Activated CD4-positive, alpha-beta T cell treated with anti-CD3 and anti-CD28 coated beads, Interleukin-2, amount 10 ng/mL, durations not matched to agents 24 days and 14 days (primary cell): ENCODE measurements at regions of chr1 and their contacts with region 1.

Region 1: DNA sequence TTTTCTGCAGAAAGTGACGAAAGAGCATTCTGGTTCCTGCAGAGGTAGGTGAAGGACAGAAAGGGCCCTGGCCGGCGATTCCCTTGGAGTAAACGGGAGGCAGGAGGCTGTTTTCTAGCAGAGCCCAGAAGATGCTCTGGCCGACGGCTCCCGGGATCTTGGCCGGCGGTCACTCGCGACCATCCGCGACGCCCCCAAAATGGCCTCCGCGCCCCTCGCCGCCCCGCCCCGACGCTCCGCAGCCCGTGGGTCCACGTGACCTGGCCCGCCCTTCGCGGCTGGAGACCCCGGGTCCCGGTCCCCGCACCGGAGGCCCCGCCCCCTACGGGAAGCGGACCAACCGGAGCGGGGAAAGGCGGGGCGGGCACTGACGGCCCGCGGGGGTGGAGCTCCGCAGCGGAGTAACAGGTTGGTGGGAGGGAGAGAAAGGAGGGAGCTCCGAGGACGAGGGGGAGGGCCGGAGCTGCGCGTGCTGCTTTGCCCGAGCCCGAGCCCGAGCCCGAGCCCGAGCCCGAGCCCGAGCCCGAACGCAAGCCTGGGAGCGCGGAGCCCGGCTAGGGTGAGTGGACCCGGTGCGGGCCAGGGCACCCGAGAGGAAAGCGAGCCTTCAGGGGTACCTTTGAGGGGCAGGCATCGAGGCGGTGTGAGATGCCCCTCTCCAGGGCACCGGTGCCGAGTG is at the start of gene CGN:
- DNase-seq: peak; percentile 96
- H3K4me3 Mint-ChIP-seq: peak within 1 kb of the TSS; percentile 82
- H3K27ac Mint-ChIP-seq: no peak within 1 kb of the TSS
- H3K4me1 Mint-ChIP-seq: peaks cover 25% of the 10 kb centered on the region
- H3K27me3 Mint-ChIP-seq: peaks cover 32% of the 10 kb centered on the region
- total RNA-seq, gene CGN: 0.07 and 0.28 TPM in 2 replicates

Region 2: DNA sequence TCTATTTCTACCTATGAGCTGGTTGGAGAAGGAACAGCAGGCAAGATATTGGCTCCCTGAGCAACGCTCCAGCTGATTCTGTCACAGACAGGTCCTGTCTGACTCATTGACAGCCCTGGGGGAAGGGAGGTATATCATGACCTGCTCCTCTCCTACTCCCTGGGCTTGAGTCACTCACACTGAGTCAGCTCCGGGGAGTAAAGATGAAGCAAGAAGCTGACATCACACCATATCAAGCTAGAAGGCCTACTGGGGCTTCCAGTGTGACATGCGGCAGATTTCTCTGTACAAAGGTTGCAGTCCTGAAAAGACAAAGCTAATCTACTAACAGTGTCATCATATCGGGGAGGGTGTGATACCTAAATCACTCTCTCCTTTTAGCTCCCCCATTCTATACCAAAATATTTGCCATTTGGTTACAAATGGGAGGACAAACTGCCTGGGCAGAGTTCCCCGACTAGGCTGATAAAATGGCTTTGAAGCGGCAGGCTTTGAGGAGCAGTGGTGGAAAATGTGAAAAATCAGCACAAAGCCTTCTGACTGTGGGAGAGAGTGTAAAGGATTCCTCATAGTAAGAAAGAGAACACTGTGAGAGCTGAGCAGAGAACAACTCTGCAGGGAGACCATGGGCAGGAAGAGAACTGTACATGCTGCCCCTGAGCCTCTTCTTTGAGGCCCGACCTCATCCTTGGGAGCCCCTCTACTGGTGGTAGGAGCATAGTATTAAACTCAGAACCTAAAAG is 199.3 kb before region 1 on chr1:
- intact Hi-C with region 1: no loop called
- DNase-seq: peak; percentile 85
- H3K4me3 Mint-ChIP-seq: peak overlapping the region; percentile 57
- H3K27ac Mint-ChIP-seq: peak overlapping the region; percentile 94
- H3K4me1 Mint-ChIP-seq: peaks cover 32% of the 10 kb centered on the region
- H3K27me3 Mint-ChIP-seq: no peaks in the 10 kb centered on the region

Region 3: GRCh38 chr1:151494741-151495281 is 16.3 kb before region 1 on chr1:
- intact Hi-C with region 1: loop called (anchors 2 kb)
- DNase-seq: no peak
- H3K4me3 Mint-ChIP-seq: no peak overlapping the region
- H3K27ac Mint-ChIP-seq: no peak overlapping the region
- H3K4me1 Mint-ChIP-seq: peaks cover 8% of the 10 kb centered on the region
- H3K27me3 Mint-ChIP-seq: peaks cover 5% of the 10 kb centered on the region

Region 4: GRCh38 chr1:151539990-151540981 is 29.2 kb after region 1 on chr1 and contains the start of gene TUFT1:
- intact Hi-C with region 1: loop called (anchors 1 kb)
- DNase-seq: peak; percentile 98
- H3K4me3 Mint-ChIP-seq: peak within 1 kb of the TSS; percentile 95
- H3K27ac Mint-ChIP-seq: peak within 1 kb of the TSS; percentile 79
- H3K4me1 Mint-ChIP-seq: peaks cover 19% of the 10 kb centered on the region
- H3K27me3 Mint-ChIP-seq: peaks cover 8% of the 10 kb centered on the region
- total RNA-seq, gene TUFT1: 1.7 and 2.1 TPM in 2 replicates